Transverse colon (tissue), 4 donors: ENCODE measurements at regions of chrX and their contacts with region 1.

Region 1: DNA sequence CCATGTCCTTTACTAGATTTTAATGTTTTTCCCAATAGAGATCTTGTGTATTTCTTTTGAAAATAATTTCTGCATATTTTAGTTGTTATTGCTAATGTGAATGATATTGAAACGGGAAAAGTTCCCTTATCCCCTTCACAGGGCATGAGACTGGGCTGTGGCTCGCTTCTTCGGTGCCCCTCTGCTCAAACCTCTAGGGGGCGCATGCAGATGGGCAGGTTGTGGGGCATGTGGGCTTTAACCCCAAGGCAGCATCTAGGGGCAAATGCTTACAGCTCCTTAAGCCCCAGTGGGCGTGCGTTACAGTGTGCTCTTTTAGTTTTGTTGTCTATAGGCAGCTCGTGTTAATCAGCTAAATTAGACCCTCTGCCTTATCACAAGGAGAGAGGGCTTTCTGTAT is 194.7 kb downstream of the OPHN1 start:
- DNase-seq: no peak
- H3K4me3 ChIP-seq: no peak overlapping the region
- H3K27ac ChIP-seq: no peak overlapping the region
- H3K4me1 ChIP-seq: no peaks in the 10 kb centered on the region
- H3K27me3 ChIP-seq: no peaks in the 10 kb centered on the region
- CTCF ChIP-seq: peak in 2 of 5 experiments; percentile 15 to 23
- EP300 ChIP-seq: no peak
- POLR2A ChIP-seq: no peak

Region 2: DNA sequence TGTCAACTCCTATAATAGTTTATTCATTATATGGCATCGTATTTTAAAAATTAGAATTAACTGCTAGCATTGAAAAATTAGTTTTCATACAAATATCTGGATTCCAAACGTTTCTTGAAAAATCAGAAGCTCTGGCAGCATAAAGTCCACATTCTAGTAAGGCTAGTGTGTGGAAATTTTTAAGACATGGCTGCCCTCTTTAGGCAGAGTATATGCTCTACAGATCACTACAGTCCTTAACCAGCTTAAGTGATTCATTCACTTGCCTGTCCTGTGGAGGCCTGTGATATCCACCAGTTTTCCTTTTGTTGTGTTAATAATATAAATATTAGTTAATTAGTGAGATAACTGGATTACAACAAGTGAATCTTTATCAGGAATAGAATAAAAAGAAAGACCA is 92.5 kb before region 1 on chrX:
- in situ Hi-C with region 1: loop called in 1 of 4 experiments (anchors 25 kb)
- intact Hi-C with region 1: no loop called
- DNase-seq: no peak
- H3K4me3 ChIP-seq: no peak overlapping the region
- H3K27ac ChIP-seq: no peak overlapping the region
- H3K4me1 ChIP-seq: no peaks in the 10 kb centered on the region
- H3K27me3 ChIP-seq: no peaks in the 10 kb centered on the region
- CTCF ChIP-seq: peak in 2 of 5 experiments; percentile 9 to 16
- EP300 ChIP-seq: no peak
- POLR2A ChIP-seq: no peak